Activated CD4-positive, alpha-beta T cell treated with anti-CD3 and anti-CD28 coated beads, Interleukin-2, amount 10 ng/mL, durations not matched to agents 7 days and 5 days (primary cell): ENCODE measurements at regions of chr11 and their contacts with region 1.

Region 1: DNA sequence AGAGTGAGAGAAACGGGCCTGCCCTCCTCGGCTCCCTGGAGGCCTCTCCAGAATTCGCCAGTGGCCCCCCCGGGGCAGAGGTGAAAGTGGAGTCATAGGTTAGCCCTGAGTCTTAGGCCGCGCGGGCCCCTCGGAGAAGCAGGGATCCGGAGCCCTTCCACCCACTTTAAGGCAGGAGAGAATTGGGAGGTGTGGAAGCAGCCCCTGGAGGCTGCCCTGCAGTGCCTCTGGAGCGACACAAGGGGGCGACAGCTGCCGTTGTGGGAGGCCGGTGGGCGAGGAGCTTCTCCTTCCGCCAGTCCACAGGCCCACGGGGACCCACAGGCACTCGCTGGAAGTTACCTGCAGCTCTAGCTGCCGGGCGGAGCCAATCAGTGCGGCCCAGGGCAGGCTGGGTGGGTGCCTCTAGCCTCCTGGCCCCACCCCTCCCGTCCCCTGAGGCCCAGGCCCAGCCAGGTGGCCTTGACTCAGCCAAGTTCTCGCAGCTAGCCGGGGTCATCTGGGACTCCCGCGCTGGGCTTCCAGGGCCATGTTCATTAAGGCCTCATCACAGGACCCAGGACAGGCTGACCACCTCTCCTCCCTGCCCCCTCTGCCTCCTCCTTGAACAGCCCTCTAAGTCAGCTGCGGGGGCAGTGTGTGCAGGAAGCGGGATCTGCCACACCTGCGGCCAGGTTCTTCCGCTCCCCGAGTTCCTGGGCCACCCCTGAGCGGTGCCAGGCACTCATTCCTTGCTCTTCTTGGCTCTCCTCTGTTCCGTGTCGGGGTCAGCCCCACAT is 5.0 kb downstream of the DGKZ start:
- DNase-seq: peak; percentile 73
- H3K4me3 Mint-ChIP-seq: peak overlapping the region; percentile 72
- H3K27ac Mint-ChIP-seq: peak overlapping the region; percentile 86
- H3K4me1 Mint-ChIP-seq: peaks cover 66% of the 10 kb centered on the region
- H3K27me3 Mint-ChIP-seq: no peaks in the 10 kb centered on the region

Region 2: GRCh38 chr11:46338988-46339666 is 13.1 kb before region 1 on chr11:
- CTCF ChIA-PET with region 1: interaction called, 280 read pairs
- POLR2A ChIA-PET with region 1: no interaction called
- DNase-seq: no peak
- H3K4me3 Mint-ChIP-seq: no peak overlapping the region
- H3K27ac Mint-ChIP-seq: no peak overlapping the region
- H3K4me1 Mint-ChIP-seq: peaks cover 71% of the 10 kb centered on the region
- H3K27me3 Mint-ChIP-seq: peaks cover 9% of the 10 kb centered on the region

Region 3: DNA sequence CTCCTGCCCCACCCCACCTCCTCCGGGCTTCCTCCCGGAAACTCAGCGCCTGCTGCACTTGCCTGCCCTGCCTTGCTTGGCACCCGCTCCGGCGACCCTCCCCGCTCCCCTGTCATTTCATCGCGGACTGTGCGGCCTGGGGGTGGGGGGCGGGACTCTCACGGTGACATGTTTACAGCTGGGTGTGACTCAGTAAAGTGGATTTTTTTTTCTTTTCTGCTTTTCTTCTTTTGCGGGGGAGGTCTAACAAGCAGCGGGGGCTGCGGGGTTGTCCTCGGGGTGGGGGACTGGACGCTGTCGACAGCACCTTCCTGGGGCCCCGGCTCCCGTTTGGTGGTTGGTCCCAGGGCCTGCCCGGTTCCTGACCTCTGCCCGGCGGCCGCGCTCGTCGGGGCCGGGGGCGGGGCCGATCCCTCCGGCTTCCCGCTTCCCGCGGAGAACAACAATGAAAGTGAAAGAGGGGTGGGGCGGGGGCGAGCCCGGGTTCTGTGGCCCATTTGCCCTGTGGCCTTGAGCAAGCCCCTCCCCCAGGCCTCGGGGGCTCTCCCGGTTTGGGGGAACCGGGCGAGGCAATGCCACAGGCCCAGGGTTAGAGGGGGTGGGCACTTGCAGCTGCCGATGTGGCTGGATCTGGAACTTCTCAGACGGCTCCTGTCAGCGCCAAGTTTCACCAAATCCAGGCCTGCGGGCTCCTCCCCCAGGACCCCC is 28.2 kb after region 1 on chr11:
- CTCF ChIA-PET with region 1: interaction called, 21 read pairs
- POLR2A ChIA-PET with region 1: no interaction called
- DNase-seq: peak; percentile 76
- H3K4me3 Mint-ChIP-seq: peak overlapping the region; percentile 69
- H3K27ac Mint-ChIP-seq: peak overlapping the region; percentile 57
- H3K4me1 Mint-ChIP-seq: peaks cover 11% of the 10 kb centered on the region
- H3K27me3 Mint-ChIP-seq: peaks cover 17% of the 10 kb centered on the region

Region 4: GRCh38 chr11:46485856-46486443 is 133.7 kb after region 1 on chr11:
- CTCF ChIA-PET with region 1: no interaction called
- POLR2A ChIA-PET with region 1: no interaction called
- DNase-seq: no peak
- H3K4me3 Mint-ChIP-seq: no peak overlapping the region
- H3K27ac Mint-ChIP-seq: no peak overlapping the region
- H3K4me1 Mint-ChIP-seq: peaks cover 4% of the 10 kb centered on the region
- H3K27me3 Mint-ChIP-seq: no peaks in the 10 kb centered on the region